Mammary epithelial cell (primary cell): ENCODE measurements at regions of chr6 and their contacts with region 1.

Region 1: GRCh38 chr6:1604158-1605030 is 5.3 kb upstream of the FOXC1 start:
- DNase-seq: peak; percentile 48
- H3K4me3 ChIP-seq: peak overlapping the region; percentile 39 to 57 (median 54)
- H3K27ac ChIP-seq: no peak overlapping the region
- H3K4me1 ChIP-seq: peaks cover 16% of the 10 kb centered on the region
- H3K27me3 ChIP-seq: no peaks in the 10 kb centered on the region
- CTCF ChIP-seq: peak; percentile 62 to 80

Region 2: GRCh38 chr6:2695454-2696095 is 1091.2 kb after region 1 on chr6:
- CTCF ChIA-PET with region 1: no interaction called
- dilution Hi-C with region 1: no loop called
- in situ Hi-C with region 1: no loop called
- intact Hi-C with region 1: loop called (anchors 1 kb)
- DNase-seq: peak; percentile 38
- H3K4me3 ChIP-seq: no peak overlapping the region
- H3K27ac ChIP-seq: no peak overlapping the region
- H3K4me1 ChIP-seq: no peaks in the 10 kb centered on the region
- H3K27me3 ChIP-seq: no peaks in the 10 kb centered on the region
- CTCF ChIP-seq: peak; percentile 17 to 50